ENCODE measurements at regions of chr14 and their contacts with region 1.

Region 1: GRCh38 chr14:96275177-96276112 is 19.4 kb downstream of the BDKRB1 start:
- DNase-seq: peak; percentile 64 to 83
- H3K4me3 ChIP-seq: no peak overlapping the region
- H3K4me3 Mint-ChIP-seq: peak overlapping the region; percentile 11
- H3K27ac Mint-ChIP-seq: no peak overlapping the region
- H3K4me1 ChIP-seq: peaks cover 12% of the 10 kb centered on the region
- H3K4me1 Mint-ChIP-seq: peaks cover 12% of the 10 kb centered on the region
- H3K27me3 ChIP-seq: no peaks in the 10 kb centered on the region
- H3K27me3 Mint-ChIP-seq: no peaks in the 10 kb centered on the region
- CTCF ChIP-seq: peak; percentile 91 to 96

Region 2: DNA sequence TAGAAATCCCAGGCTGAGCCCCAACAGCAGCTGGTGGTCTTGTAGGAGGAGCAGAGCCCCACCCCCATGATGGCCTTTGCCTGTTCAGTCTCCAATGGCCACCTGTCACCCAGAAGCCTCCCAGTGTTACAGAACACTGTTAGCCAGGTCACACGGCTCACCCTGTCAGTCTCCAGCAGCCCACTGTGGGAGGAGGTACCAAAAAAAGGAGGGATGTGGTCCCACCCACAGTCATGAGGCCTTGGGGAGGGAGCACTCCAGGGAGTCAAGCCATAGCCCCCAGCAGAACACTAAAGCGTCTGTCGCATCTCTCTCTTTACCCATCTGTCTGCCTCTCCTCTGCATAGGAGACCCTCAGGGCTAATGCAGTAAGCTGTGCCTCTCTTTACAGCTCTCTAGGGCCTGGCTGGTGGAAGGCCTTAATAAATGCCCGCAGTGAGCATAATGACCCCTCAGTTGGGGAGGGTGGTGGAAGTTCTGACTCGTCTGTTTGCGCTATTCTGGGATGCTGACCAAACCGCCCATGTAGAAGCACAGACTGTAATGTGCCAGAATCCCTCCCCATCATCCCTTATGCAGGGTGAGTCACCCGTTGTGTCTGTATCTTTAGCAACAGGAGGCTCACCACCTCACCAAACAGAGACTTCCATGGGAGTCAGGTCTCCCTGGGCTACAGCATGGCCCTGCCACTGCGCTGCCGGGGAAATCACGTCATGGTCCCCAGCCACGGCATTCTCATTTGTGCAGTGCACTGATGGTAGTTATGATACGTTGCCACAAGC is 221.7 kb before region 1 on chr14:
- CTCF ChIA-PET with region 1: no interaction called
- POLR2A ChIA-PET with region 1: no interaction called
- intact Hi-C with region 1: loop called (anchors 5 kb)
- DNase-seq: no peak
- H3K4me3 ChIP-seq: no peak overlapping the region
- H3K4me3 Mint-ChIP-seq: no peak overlapping the region
- H3K27ac Mint-ChIP-seq: no peak overlapping the region
- H3K4me1 ChIP-seq: no peaks in the 10 kb centered on the region
- H3K4me1 Mint-ChIP-seq: no peaks in the 10 kb centered on the region
- H3K27me3 ChIP-seq: no peaks in the 10 kb centered on the region
- H3K27me3 Mint-ChIP-seq: peaks cover 10% of the 10 kb centered on the region
- CTCF ChIP-seq: no peak

Region 3: GRCh38 chr14:96129128-96129736 is 146.2 kb before region 1 on chr14:
- CTCF ChIA-PET with region 1: no interaction called
- POLR2A ChIA-PET with region 1: no interaction called
- intact Hi-C with region 1: loop called (anchors 1 kb)
- DNase-seq: no peak
- H3K4me3 ChIP-seq: no peak overlapping the region
- H3K4me3 Mint-ChIP-seq: no peak overlapping the region
- H3K27ac Mint-ChIP-seq: no peak overlapping the region
- H3K4me1 ChIP-seq: no peaks in the 10 kb centered on the region
- H3K4me1 Mint-ChIP-seq: peaks cover 6% of the 10 kb centered on the region
- H3K27me3 ChIP-seq: no peaks in the 10 kb centered on the region
- H3K27me3 Mint-ChIP-seq: no peaks in the 10 kb centered on the region
- CTCF ChIP-seq: no peak

Region 4: GRCh38 chr14:96198430-96199130 is 76.9 kb before region 1 on chr14:
- CTCF ChIA-PET with region 1: no interaction called
- POLR2A ChIA-PET with region 1: no interaction called
- intact Hi-C with region 1: loop called (anchors 5 kb)
- DNase-seq: peak in 1 of 2 experiments; percentile 8
- H3K4me3 ChIP-seq: no peak overlapping the region
- H3K4me3 Mint-ChIP-seq: no peak overlapping the region
- H3K27ac Mint-ChIP-seq: no peak overlapping the region
- H3K4me1 ChIP-seq: peaks cover 32% of the 10 kb centered on the region
- H3K4me1 Mint-ChIP-seq: peaks cover 28% of the 10 kb centered on the region
- H3K27me3 ChIP-seq: no peaks in the 10 kb centered on the region
- H3K27me3 Mint-ChIP-seq: no peaks in the 10 kb centered on the region
- CTCF ChIP-seq: no peak

Region 5: GRCh38 chr14:96362071-96362964 is 86.9 kb after region 1 on chr14:
- CTCF ChIA-PET with region 1: no interaction called
- POLR2A ChIA-PET with region 1: no interaction called
- intact Hi-C with region 1: no loop called
- DNase-seq: peak; percentile 63 to 72
- H3K4me3 ChIP-seq: peak overlapping the region; percentile 95
- H3K4me3 Mint-ChIP-seq: peak overlapping the region; percentile 93
- H3K27ac Mint-ChIP-seq: peak overlapping the region; percentile 82
- H3K4me1 ChIP-seq: peaks cover 18% of the 10 kb centered on the region; the same call in 1 of the 2 replicates
- H3K4me1 Mint-ChIP-seq: peaks cover 15% of the 10 kb centered on the region
- H3K27me3 ChIP-seq: no peaks in the 10 kb centered on the region
- H3K27me3 Mint-ChIP-seq: no peaks in the 10 kb centered on the region
- CTCF ChIP-seq: no peak